Dendritic cell treated with granulocyte-macrophage colony-stimulating factor and Interleukin-4, amounts not matched to agents 40 ng/mL and 50 ng/mL, for 4 days (primary cell): ENCODE measurements at regions of chr6 and their contacts with region 1.

Region 1: DNA sequence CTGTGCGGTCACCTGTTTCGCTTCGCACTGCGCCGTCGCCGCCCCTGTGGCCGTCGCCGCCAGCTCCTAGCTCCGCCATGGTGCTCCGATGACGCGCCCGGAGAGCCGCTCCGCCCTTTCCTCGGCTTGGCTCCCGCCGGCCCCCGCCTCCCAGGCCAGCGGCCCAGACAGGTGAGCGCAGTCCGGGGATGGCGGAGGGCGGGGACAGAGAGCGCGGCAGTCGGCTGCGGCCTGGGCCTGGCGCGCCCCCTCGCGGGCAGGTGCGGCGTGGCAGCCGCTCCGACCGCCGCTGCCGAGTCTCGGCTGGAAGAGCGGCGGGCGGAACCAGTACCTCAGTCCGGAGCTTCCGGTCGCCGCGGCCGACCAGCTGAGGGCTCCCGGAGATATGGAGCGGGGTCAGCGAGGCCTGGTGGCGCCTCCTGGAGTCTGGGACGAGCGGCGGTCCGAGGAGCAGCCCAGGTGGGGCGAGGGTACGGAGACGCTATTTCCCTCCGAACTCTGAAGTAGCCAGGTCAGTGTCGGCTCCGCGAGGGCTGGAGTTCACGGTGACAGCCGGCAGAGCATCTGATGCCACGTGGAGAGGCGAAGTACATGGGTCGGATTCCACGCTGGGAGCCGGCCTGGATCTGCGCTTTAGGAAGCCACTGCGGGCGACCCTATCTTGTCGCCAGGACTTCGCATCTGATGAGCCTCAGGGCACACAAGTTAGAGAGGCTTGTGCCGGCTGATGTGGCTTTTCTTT is at the start of gene MAP7:
- H3K4me3 Mint-ChIP-seq: peak within 1 kb of the TSS; percentile 75
- H3K27ac Mint-ChIP-seq: peak within 1 kb of the TSS; percentile 44
- H3K4me1 Mint-ChIP-seq: peaks cover 13% of the 10 kb centered on the region
- H3K27me3 Mint-ChIP-seq: peaks cover 37% of the 10 kb centered on the region

Region 2: GRCh38 chr6:136249811-136250685 is 300.5 kb before region 1 on chr6 and contains the start of gene MTFR2:
- intact Hi-C with region 1: loop called (anchors 5 kb)
- H3K4me3 Mint-ChIP-seq: peak within 1 kb of the TSS; percentile 98
- H3K27ac Mint-ChIP-seq: peak within 1 kb of the TSS; percentile 88
- H3K4me1 Mint-ChIP-seq: peaks cover 37% of the 10 kb centered on the region
- H3K27me3 Mint-ChIP-seq: no peaks in the 10 kb centered on the region

Region 3: GRCh38 chr6:136365776-136366354 is 184.6 kb before region 1 on chr6:
- intact Hi-C with region 1: loop called (anchors 10 kb)
- H3K4me3 Mint-ChIP-seq: peak overlapping the region; percentile 58
- H3K27ac Mint-ChIP-seq: peak overlapping the region; percentile 90
- H3K4me1 Mint-ChIP-seq: peaks cover 38% of the 10 kb centered on the region
- H3K27me3 Mint-ChIP-seq: no peaks in the 10 kb centered on the region

Region 4: DNA sequence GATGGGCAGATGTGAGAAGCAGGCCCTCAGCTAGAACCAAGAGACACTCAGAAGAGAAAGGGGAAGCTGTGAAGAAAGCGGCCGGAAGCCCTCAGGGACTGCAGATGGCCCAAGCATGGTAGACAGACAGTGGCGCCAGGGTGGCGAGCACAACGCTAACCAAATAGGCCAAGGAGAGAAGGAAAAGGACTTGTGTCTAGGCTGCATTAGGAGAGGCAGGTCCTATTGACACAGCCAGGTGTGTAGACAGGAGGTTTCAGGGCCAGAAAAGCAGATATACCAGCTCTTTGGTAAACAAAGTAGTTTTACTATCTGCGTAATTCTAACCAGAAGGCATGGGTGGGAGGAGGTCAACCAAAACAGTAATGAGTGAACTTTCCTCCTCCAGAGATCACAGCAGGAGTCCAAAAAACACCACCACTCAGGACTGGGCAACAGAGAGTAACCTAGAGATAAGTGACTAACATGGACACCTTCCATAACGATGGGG is 15.6 kb after region 1 on chr6:
- intact Hi-C with region 1: no loop called
- H3K4me3 Mint-ChIP-seq: no peak overlapping the region
- H3K27ac Mint-ChIP-seq: peak overlapping the region; percentile 70
- H3K4me1 Mint-ChIP-seq: peaks cover 11% of the 10 kb centered on the region
- H3K27me3 Mint-ChIP-seq: no peaks in the 10 kb centered on the region

Region 5: DNA sequence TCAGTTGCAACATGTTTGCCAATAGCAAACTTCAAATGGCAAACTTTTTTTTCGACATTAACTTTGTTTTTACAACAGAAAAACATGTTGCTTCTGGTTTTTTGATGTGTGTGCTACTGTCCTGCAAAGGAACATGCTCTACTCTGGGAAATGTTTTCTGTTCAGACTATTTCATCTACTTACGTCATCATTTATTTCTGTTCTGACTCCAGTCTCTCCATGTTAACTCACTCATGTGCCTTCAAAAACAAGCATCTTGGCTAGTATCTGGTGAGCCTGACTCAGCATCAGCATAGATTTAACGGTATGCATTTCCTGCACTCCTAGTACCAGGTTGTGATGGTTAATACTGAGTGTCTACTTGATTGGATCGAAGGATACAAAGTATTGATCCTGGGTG is 35.8 kb after region 1 on chr6:
- intact Hi-C with region 1: no loop called
- H3K4me3 Mint-ChIP-seq: no peak overlapping the region
- H3K27ac Mint-ChIP-seq: no peak overlapping the region
- H3K4me1 Mint-ChIP-seq: peaks cover 25% of the 10 kb centered on the region
- H3K27me3 Mint-ChIP-seq: no peaks in the 10 kb centered on the region

Region 6: GRCh38 chr6:136866872-136867416 is 316.4 kb after region 1 on chr6:
- intact Hi-C with region 1: no loop called
- H3K4me3 Mint-ChIP-seq: no peak overlapping the region
- H3K27ac Mint-ChIP-seq: no peak overlapping the region
- H3K4me1 Mint-ChIP-seq: no peaks in the 10 kb centered on the region
- H3K27me3 Mint-ChIP-seq: no peaks in the 10 kb centered on the region